PC-3 (cell line): ENCODE measurements at regions of chr2 and their contacts with region 1.

Region 1: DNA sequence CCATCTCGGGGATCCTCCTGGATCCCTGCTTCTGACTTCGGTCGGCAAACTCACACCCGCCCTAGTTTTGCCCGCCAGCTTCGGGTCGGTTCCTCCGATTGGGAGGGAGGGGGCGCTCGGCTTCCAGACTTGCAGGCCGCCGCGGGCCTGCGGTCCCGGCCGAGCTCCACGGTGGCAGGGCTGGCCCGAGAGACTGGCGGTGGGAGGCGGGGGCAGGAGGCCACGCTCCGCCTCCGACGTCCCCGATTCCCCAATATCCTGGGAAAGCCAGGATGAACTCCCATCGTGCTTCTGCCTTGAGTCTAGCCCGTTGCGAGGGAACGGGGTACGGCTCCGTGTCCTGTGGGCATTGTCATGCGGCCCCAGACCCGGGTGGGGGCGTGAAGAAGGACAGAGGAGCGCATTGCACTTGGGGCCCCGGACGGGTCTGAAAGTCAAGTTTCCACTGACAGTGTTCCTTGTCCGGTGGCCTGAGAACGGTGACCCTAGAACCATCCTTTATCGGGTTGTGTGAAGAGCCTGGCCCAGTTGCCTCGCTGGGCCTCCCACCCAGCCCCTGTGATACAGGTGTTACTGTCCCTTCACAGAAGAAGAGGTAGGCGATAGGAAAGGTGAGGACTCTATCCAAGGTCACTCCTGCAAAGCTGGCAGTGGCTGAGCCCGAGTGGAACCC is 2.4 kb upstream of the INHBB start:
- DNase-seq: peak; percentile 92
- ATAC-seq: peak; percentile 63
- H3K4me3 ChIP-seq: peak overlapping the region; percentile 66
- H3K27ac ChIP-seq: peak overlapping the region; percentile 86
- H3K4me1 ChIP-seq: peaks cover 7% of the 10 kb centered on the region
- H3K27me3 ChIP-seq: no peaks in the 10 kb centered on the region
- CTCF ChIP-seq: peak; percentile 93

Region 2: GRCh38 chr2:120436885-120437603 is 93.5 kb after region 1 on chr2:
- CTCF ChIA-PET with region 1: interaction called, 6 read pairs
- POLR2A ChIA-PET with region 1: no interaction called
- intact Hi-C with region 1: loop called (anchors 1 kb)
- DNase-seq: peak; percentile 92
- ATAC-seq: peak; percentile 72
- H3K4me3 ChIP-seq: no peak overlapping the region
- H3K27ac ChIP-seq: peak overlapping the region; percentile 9; the same call in 1 of the 2 replicates
- H3K4me1 ChIP-seq: peaks cover 26% of the 10 kb centered on the region
- H3K27me3 ChIP-seq: no peaks in the 10 kb centered on the region
- CTCF ChIP-seq: peak; percentile 88

Region 3: DNA sequence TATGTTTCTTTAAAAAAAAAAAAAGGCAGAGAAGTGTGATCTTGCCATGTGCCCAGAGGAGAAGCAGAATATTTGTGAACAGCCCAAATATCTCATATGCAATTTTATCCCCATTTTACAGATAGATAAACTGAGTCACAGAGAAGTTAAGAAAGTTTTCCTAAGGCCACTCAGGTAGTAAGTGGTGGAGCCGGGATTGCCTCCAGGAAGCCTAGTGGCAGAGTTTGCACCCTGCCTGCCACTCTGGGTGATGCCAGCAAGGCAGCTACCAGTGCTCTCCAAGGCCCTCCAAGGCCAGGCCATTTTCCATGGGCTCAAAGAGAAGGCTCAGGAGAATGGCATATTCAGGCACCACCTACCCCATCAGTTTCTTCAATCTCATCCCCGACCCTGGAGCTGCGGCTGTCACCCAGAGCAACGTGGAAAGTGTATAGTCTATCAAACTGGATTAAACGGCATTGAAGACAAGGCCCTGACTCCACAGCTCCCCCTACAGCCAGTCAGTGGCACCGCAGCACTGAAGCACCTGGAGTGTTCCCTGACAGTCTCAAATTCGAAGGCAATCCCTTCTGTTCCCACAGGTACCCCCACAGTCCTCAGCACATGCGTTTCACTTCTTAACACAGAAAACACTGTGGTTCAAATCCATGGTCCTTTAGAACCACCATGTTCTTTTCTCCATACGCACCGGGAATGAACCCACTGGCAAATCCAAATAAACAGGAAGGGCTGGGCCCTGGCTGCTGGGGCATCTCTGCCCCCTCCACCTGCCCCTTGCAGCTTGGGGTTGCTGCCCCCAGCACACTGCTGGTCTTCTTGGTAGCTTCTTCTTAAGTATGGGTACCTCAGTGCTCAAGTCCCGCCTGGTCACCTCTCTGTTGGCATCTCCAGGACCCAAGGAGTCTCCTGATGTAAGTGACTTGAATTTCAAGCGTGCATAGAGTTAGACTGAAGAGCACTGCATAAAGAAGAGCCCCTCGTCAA is 177.7 kb after region 1 on chr2:
- CTCF ChIA-PET with region 1: interaction called, 6 read pairs
- POLR2A ChIA-PET with region 1: no interaction called
- intact Hi-C with region 1: loop called (anchors 1 kb)
- DNase-seq: peak; percentile 79
- ATAC-seq: peak; percentile 84
- H3K4me3 ChIP-seq: no peak overlapping the region
- H3K27ac ChIP-seq: no peak overlapping the region
- H3K4me1 ChIP-seq: peaks cover 11% of the 10 kb centered on the region
- H3K27me3 ChIP-seq: no peaks in the 10 kb centered on the region
- CTCF ChIP-seq: peak; percentile 92

Region 4: GRCh38 chr2:120596990-120597594 is 253.5 kb after region 1 on chr2:
- CTCF ChIA-PET with region 1: no interaction called
- POLR2A ChIA-PET with region 1: no interaction called
- intact Hi-C with region 1: no loop called
- DNase-seq: no peak
- ATAC-seq: no peak
- H3K4me3 ChIP-seq: no peak overlapping the region
- H3K27ac ChIP-seq: no peak overlapping the region
- H3K4me1 ChIP-seq: no peaks in the 10 kb centered on the region
- H3K27me3 ChIP-seq: no peaks in the 10 kb centered on the region
- CTCF ChIP-seq: no peak

Region 5: DNA sequence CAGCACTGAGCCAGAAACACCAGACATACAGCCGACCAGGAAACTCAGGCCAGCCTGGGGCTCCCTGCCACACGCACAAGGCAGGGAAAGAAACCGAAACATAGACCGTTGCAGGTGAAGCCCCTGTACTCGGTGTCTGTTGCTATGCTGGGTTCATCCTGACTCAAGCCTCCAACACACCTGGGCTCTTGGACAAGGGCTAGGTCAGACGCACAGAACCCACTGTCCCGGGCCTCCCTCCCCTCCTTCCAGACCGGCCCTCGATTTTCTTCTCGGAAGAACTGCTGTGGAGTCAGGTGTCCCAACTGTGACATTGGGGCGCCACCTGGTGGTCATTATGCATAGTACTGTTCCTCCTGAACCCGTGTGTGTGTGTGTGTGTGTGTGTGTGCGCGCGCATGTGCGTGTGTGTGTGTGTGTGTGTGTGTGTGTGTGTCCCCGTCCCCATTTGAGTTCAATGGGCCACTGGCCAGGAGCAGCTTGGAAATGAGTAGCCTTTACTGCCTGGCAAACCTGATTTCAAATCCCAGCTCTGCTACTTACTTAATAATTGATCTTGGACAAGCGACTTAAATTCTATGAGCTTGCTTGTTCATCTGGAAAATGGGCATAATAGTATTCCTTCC is 336.7 kb after region 1 on chr2:
- CTCF ChIA-PET with region 1: interaction called, 6 read pairs
- POLR2A ChIA-PET with region 1: interaction called, 4 read pairs
- intact Hi-C with region 1: loop called (anchors 1 kb)
- DNase-seq: peak; percentile 87
- ATAC-seq: peak; percentile 77
- H3K4me3 ChIP-seq: 0 out of 2 replicates have a peak overlapping the region, but pooled peaks have one; percentile 22
- H3K27ac ChIP-seq: no peak overlapping the region
- H3K4me1 ChIP-seq: peaks cover 14% of the 10 kb centered on the region
- H3K27me3 ChIP-seq: no peaks in the 10 kb centered on the region
- CTCF ChIP-seq: peak; percentile 60